Activated naive CD4-positive, alpha-beta T cell treated with anti-CD3 and anti-CD28 coated beads for 36 hours (primary cell): ENCODE measurements at regions of chr10 and their contacts with region 1.

Region 1: GRCh38 chr10:26486991-26487850 is 49.1 kb downstream of the APBB1IP start:
- DNase-seq: peak; percentile 89
- H3K4me3 Mint-ChIP-seq: peak overlapping the region; percentile 56
- H3K27ac Mint-ChIP-seq: peak overlapping the region; percentile 98
- H3K4me1 Mint-ChIP-seq: peaks cover 68% of the 10 kb centered on the region
- H3K27me3 Mint-ChIP-seq: no peaks in the 10 kb centered on the region

Region 2: GRCh38 chr10:26357203-26357602 is 130.0 kb before region 1 on chr10:
- CTCF ChIA-PET with region 1: no interaction called
- intact Hi-C with region 1: loop called (anchors 1 kb)
- DNase-seq: peak; percentile 32
- H3K4me3 Mint-ChIP-seq: no peak overlapping the region
- H3K27ac Mint-ChIP-seq: no peak overlapping the region
- H3K4me1 Mint-ChIP-seq: peaks cover 13% of the 10 kb centered on the region
- H3K27me3 Mint-ChIP-seq: no peaks in the 10 kb centered on the region

Region 3: DNA sequence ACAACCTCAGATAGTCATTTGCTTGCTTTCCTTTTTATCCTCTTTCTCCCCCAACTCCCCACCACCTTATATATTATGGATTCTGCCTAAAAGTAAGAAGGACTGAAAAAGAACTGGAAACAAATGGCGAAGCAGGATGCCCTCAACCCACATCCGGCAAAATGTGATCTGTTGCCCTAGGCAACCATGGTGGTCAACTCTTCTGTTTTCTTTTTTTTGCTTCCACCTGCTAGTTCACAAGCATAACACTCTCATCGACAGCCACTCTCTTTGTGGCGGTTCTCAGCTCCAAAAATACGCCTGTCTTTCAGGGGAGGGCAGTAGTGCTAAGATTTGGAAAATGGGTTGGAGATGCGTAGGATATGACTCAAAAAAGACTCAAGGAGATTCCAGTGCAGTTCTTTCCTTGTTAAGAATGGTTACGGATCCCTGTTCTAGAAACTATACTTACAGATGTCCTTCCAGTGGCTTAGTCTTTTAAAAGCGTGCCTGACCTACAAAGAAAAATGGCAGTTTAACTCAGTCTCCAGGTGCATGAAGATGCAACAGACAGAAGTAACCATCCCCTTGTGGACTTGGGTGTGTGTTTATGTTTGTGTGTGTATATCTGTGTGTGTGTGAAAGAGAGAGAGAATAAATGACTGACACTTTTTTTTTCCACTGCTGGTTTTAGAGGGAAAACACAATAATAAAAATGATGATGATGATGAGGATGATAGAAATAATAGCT is 38.4 kb before region 1 on chr10:
- CTCF ChIA-PET with region 1: no interaction called
- intact Hi-C with region 1: loop called (anchors 1 kb)
- DNase-seq: peak; percentile 85
- H3K4me3 Mint-ChIP-seq: peak overlapping the region; percentile 54
- H3K27ac Mint-ChIP-seq: peak overlapping the region; percentile 88
- H3K4me1 Mint-ChIP-seq: peaks cover 87% of the 10 kb centered on the region
- H3K27me3 Mint-ChIP-seq: no peaks in the 10 kb centered on the region

Region 4: GRCh38 chr10:26697163-26697921 is 210.1 kb after region 1 on chr10 and contains the start of gene PDSS1:
- CTCF ChIA-PET with region 1: no interaction called
- intact Hi-C with region 1: loop called (anchors 2 kb)
- DNase-seq: peak; percentile 72
- H3K4me3 Mint-ChIP-seq: peak within 1 kb of the TSS; percentile 96
- H3K27ac Mint-ChIP-seq: peak within 1 kb of the TSS; percentile 89
- H3K4me1 Mint-ChIP-seq: peaks cover 39% of the 10 kb centered on the region
- H3K27me3 Mint-ChIP-seq: no peaks in the 10 kb centered on the region
- total RNA-seq, gene PDSS1: 14.5 to 16.0 TPM

Region 5: GRCh38 chr10:27099916-27100812 is 612.9 kb after region 1 on chr10 and contains the start of gene ANKRD26:
- CTCF ChIA-PET with region 1: no interaction called
- intact Hi-C with region 1: loop called (anchors 1 kb)
- DNase-seq: peak; percentile 96
- H3K4me3 Mint-ChIP-seq: peak within 1 kb of the TSS; percentile 83
- H3K27ac Mint-ChIP-seq: peak within 1 kb of the TSS; percentile 92
- H3K4me1 Mint-ChIP-seq: peaks cover 44% of the 10 kb centered on the region
- H3K27me3 Mint-ChIP-seq: peaks cover 2% of the 10 kb centered on the region
- total RNA-seq, gene ANKRD26: 4.6 to 6.6 TPM